HepG2 (cell line): ENCODE measurements at regions of chr19 and their contacts with region 1.

Region 1: GRCh38 chr19:54137086-54137921 is at the start of gene CNOT3:
- DNase-seq: peak; percentile 100
- ATAC-seq: peak; percentile 88
- H3K4me3 ChIP-seq: peak within 1 kb of the TSS; percentile 74 to 86 (median 82)
- H3K27ac ChIP-seq: peak within 1 kb of the TSS; percentile 88
- H3K4me1 ChIP-seq: peaks cover 42% of the 10 kb centered on the region
- H3K27me3 ChIP-seq: no peaks in the 10 kb centered on the region; a peak in 1 of 5 replicates
- CTCF ChIP-seq: no peak
- EP300 ChIP-seq: no peak
- POLR2A ChIP-seq: peak; percentile 78 to 82
- RAD21 ChIP-seq: 0 out of 2 replicates have a peak, but pooled peaks have one; percentile 27
- total RNA-seq, gene CNOT3: 5.8 and 7.6 TPM in 2 replicates

Region 2: GRCh38 chr19:54084410-54084809 is 52.9 kb before region 1 on chr19:
- CTCF ChIA-PET with region 1: no interaction called
- POLR2A ChIA-PET with region 1: no interaction called
- in situ Hi-C with region 1: no loop called
- intact Hi-C with region 1: no loop called
- DNase-seq: no peak
- ATAC-seq: no peak
- H3K4me3 ChIP-seq: no peak overlapping the region
- H3K27ac ChIP-seq: no peak overlapping the region
- H3K4me1 ChIP-seq: no peaks in the 10 kb centered on the region
- H3K27me3 ChIP-seq: no peaks in the 10 kb centered on the region
- CTCF ChIP-seq: no peak
- EP300 ChIP-seq: no peak
- POLR2A ChIP-seq: no peak
- RAD21 ChIP-seq: no peak

Region 3: GRCh38 chr19:54115109-54116063 is 21.9 kb before region 1 on chr19 and contains the starts of genes PRPF31 and TFPT:
- CTCF ChIA-PET with region 1: no interaction called
- POLR2A ChIA-PET with region 1: interaction called, 38 read pairs
- in situ Hi-C with region 1: no loop called
- intact Hi-C with region 1: no loop called
- DNase-seq: peak; percentile 96
- ATAC-seq: peak; percentile 97
- H3K4me3 ChIP-seq: peak within 1 kb of the TSS; percentile 77 to 91 (median 82)
- H3K27ac ChIP-seq: peak within 1 kb of the TSS; percentile 88
- H3K4me1 ChIP-seq: peaks cover 21% of the 10 kb centered on the region
- H3K27me3 ChIP-seq: no peaks in the 10 kb centered on the region; a peak in 1 of 5 replicates
- CTCF ChIP-seq: no peak
- EP300 ChIP-seq: no peak
- POLR2A ChIP-seq: peak; percentile 75 to 87
- RAD21 ChIP-seq: no peak
- total RNA-seq, gene PRPF31: 63.8 and 68.9 TPM in 2 replicates
- total RNA-seq, gene TFPT: 10.7 and 13.5 TPM in 2 replicates

Region 4: GRCh38 chr19:54148158-54148919 is 11.0 kb after region 1 on chr19:
- CTCF ChIA-PET with region 1: no interaction called
- POLR2A ChIA-PET with region 1: interaction called, 19 read pairs
- in situ Hi-C with region 1: no loop called
- intact Hi-C with region 1: no loop called
- DNase-seq: no peak
- ATAC-seq: no peak
- H3K4me3 ChIP-seq: no peak overlapping the region
- H3K27ac ChIP-seq: no peak overlapping the region
- H3K4me1 ChIP-seq: no peaks in the 10 kb centered on the region
- H3K27me3 ChIP-seq: no peaks in the 10 kb centered on the region
- CTCF ChIP-seq: no peak
- EP300 ChIP-seq: no peak
- POLR2A ChIP-seq: no peak
- RAD21 ChIP-seq: no peak

Region 5: GRCh38 chr19:54159352-54160181 is 22.3 kb after region 1 on chr19 and contains the start of gene LENG1:
- CTCF ChIA-PET with region 1: no interaction called
- POLR2A ChIA-PET with region 1: interaction called, 48 read pairs
- in situ Hi-C with region 1: no loop called
- intact Hi-C with region 1: no loop called
- DNase-seq: peak; percentile 100
- ATAC-seq: peak; percentile 94
- H3K4me3 ChIP-seq: peak within 1 kb of the TSS; percentile 75 to 93 (median 80)
- H3K27ac ChIP-seq: peak within 1 kb of the TSS; percentile 90
- H3K4me1 ChIP-seq: peaks cover 13% of the 10 kb centered on the region
- H3K27me3 ChIP-seq: no peaks in the 10 kb centered on the region; a peak in 1 of 5 replicates
- CTCF ChIP-seq: peak; percentile 68
- EP300 ChIP-seq: no peak; a peak in 1 of 4 replicates
- POLR2A ChIP-seq: peak; percentile 47 to 62; a peak in 2 of 4 replicates
- RAD21 ChIP-seq: 0 out of 2 replicates have a peak, but pooled peaks have one; percentile 35
- total RNA-seq, gene LENG1: 3.8 and 4.0 TPM in 2 replicates

Region 6: GRCh38 chr19:54203151-54203611 is 65.9 kb after region 1 on chr19:
- CTCF ChIA-PET with region 1: no interaction called
- POLR2A ChIA-PET with region 1: interaction called, 26 read pairs
- in situ Hi-C with region 1: no loop called
- intact Hi-C with region 1: loop called (anchors 5 kb)
- DNase-seq: peak; percentile 82
- ATAC-seq: peak; percentile 32
- H3K4me3 ChIP-seq: peak overlapping the region; percentile 61 to 83 (median 72)
- H3K27ac ChIP-seq: peak overlapping the region; percentile 24
- H3K4me1 ChIP-seq: peaks cover 75% of the 10 kb centered on the region
- H3K27me3 ChIP-seq: no peaks in the 10 kb centered on the region; a peak in 1 of 5 replicates
- CTCF ChIP-seq: no peak
- EP300 ChIP-seq: no peak
- POLR2A ChIP-seq: peak in 1 of 2 experiments; percentile 19; a peak in 1 of 4 replicates
- RAD21 ChIP-seq: no peak

Region 7: DNA sequence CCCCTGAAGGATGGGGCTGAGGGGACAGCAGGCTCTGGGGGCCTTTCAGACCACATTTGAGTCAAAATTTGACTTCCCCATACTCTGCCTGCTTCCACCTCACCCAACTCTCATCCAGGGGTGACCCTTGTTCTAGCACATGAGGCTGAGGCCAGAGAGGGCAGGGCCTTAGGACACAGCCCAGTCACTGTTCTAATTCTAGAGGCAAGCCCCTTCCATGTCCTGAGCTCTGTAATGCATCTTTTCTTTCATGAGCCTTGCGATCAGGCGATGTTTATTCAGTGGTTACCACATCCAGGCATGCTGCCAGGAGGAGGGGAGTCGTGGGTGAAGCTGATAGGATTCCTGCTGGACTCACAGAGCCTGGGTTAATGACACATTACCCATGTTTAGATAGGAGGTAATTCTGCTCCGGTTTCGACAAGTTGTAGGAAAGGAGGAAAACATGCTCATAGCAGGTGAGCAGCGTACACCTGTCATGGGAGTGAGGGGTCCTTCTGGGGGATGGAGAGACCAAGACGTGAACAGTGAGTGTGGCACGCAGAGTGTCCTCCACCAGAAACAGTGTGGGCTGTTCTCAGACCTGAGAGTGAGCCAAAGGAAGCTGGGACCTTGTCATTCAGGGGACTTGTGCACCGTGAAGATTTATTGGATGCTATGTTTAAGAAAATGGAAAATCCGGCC is 72.6 kb after region 1 on chr19:
- CTCF ChIA-PET with region 1: no interaction called
- POLR2A ChIA-PET with region 1: interaction called, 17 read pairs
- in situ Hi-C with region 1: no loop called
- intact Hi-C with region 1: no loop called
- DNase-seq: peak; percentile 98
- ATAC-seq: peak; percentile 73
- H3K4me3 ChIP-seq: peak overlapping the region; percentile 11 to 55 (median 15); a peak in 4 of 6 replicates
- H3K27ac ChIP-seq: peak overlapping the region; percentile 80
- H3K4me1 ChIP-seq: peaks cover 68% of the 10 kb centered on the region
- H3K27me3 ChIP-seq: no peaks in the 10 kb centered on the region
- CTCF ChIP-seq: no peak
- EP300 ChIP-seq: peak; percentile 9 to 80; a peak in 3 of 4 replicates
- POLR2A ChIP-seq: peak; percentile 16 to 52; a peak in 3 of 4 replicates
- RAD21 ChIP-seq: no peak

Region 8: DNA sequence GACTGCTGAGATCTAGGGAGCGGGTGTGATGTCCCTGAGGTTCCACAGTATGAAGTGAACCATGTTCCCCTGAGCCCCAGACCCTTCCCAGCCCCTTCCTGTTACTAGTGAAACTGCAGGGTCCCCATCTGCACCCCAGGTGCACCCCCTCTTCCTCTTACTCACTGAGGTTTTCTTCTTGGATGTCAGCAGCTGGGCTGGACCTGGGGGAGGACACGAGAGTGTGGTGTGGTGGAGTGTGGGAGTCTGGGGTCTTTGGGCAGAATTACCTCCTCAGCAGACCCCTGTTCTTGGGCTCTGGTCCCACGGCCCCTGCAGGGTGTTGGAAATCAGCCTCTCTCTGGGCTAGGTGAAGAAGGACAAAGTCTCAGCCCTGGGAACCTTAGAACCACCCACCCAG is 108.6 kb after region 1 on chr19:
- CTCF ChIA-PET with region 1: no interaction called
- POLR2A ChIA-PET with region 1: no interaction called
- in situ Hi-C with region 1: no loop called
- intact Hi-C with region 1: no loop called
- DNase-seq: no peak
- ATAC-seq: no peak
- H3K4me3 ChIP-seq: no peak overlapping the region
- H3K27ac ChIP-seq: no peak overlapping the region
- H3K4me1 ChIP-seq: no peaks in the 10 kb centered on the region
- H3K27me3 ChIP-seq: peaks cover 2 to 24% of the 10 kb centered on the region in 2 experiments; a peak in 4 of 5 replicates
- CTCF ChIP-seq: no peak
- EP300 ChIP-seq: no peak
- POLR2A ChIP-seq: no peak
- RAD21 ChIP-seq: no peak

Region 9: DNA sequence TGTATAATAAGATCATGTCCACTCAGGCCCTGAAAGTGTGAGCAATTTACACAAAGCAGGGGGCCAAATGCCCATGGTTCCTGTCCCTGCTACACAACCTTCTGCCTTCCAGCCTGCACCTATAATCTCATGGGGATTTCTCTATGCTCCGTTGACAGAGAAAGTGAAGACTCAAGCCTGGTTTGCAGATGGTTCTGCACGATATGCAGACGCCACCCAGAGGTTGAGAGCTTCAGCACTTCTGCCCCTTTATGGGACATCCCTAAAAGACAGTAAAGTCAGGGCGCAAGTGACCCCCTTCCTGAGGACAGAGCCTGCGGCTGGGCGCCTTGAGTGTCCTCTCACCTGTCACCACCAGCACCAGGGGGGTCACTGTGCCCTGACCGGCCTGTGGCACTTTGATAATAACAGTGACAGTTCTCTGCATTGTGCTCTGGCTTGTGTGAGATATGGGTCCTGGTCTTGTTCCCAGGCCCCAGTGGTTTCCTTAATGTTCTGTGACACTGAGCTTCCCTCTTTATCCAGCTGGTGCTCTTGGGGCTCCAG is 160.5 kb after region 1 on chr19:
- CTCF ChIA-PET with region 1: no interaction called
- POLR2A ChIA-PET with region 1: no interaction called
- in situ Hi-C with region 1: no loop called
- intact Hi-C with region 1: no loop called
- DNase-seq: no peak
- ATAC-seq: no peak; the same call in 2 of the 3 replicates
- H3K4me3 ChIP-seq: no peak overlapping the region
- H3K27ac ChIP-seq: no peak overlapping the region
- H3K4me1 ChIP-seq: no peaks in the 10 kb centered on the region
- H3K27me3 ChIP-seq: peaks cover 0 to 25% of the 10 kb centered on the region in 2 experiments; a peak in 3 of 5 replicates
- CTCF ChIP-seq: peak; percentile 30
- EP300 ChIP-seq: no peak
- POLR2A ChIP-seq: no peak
- RAD21 ChIP-seq: no peak